Colonic mucosa (tissue), 4 donors: ENCODE measurements at regions of chr13 and their contacts with region 1.

Region 1: DNA sequence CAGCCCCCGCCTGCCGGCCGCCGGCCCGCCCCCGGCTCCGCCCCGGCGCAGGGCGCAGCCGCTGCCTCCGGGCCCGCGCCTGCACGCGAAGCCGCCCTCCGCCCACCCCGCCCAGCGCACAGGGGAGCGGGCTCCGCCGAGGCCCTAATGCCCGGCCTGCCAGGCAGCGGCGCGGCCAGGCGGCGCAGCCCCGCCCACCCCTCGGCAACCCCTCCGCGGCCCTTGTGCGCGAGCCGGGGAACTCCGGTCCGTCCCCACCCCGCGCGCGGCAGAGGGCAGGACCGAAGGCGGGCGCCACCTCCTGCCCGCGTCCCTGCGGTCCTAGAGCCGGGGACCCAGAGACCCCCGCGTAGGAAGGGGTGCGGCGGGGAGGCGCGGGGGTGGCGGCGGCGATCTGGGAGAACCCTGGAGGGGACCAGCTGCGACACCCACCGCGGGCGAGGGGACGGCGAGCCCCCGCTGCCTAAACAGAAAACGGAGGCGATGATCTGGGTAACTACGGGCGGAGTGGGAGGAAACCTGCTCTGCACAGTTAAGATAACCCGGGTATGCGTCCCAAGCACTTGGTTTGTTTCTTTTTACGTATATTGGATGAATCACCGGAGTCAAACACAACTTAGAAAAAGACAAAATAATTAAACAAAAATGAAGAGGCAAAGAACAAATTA is 350 bp upstream of the USP12 start:
- DNase-seq: peak; percentile 92
- H3K4me3 ChIP-seq: peak overlapping the region; percentile 66
- H3K27ac ChIP-seq: peak overlapping the region; percentile 95
- H3K4me1 ChIP-seq: peaks cover 5% of the 10 kb centered on the region
- H3K27me3 ChIP-seq: no peaks in the 10 kb centered on the region
- CTCF ChIP-seq: peak; percentile 20

Region 2: GRCh38 chr13:27117158-27117557 is 54.8 kb before region 1 on chr13:
- intact Hi-C with region 1: loop called (anchors 10 kb)
- DNase-seq: no peak
- H3K4me3 ChIP-seq: no peak overlapping the region
- H3K27ac ChIP-seq: no peak overlapping the region
- H3K4me1 ChIP-seq: no peaks in the 10 kb centered on the region
- H3K27me3 ChIP-seq: no peaks in the 10 kb centered on the region
- CTCF ChIP-seq: no peak

Region 3: DNA sequence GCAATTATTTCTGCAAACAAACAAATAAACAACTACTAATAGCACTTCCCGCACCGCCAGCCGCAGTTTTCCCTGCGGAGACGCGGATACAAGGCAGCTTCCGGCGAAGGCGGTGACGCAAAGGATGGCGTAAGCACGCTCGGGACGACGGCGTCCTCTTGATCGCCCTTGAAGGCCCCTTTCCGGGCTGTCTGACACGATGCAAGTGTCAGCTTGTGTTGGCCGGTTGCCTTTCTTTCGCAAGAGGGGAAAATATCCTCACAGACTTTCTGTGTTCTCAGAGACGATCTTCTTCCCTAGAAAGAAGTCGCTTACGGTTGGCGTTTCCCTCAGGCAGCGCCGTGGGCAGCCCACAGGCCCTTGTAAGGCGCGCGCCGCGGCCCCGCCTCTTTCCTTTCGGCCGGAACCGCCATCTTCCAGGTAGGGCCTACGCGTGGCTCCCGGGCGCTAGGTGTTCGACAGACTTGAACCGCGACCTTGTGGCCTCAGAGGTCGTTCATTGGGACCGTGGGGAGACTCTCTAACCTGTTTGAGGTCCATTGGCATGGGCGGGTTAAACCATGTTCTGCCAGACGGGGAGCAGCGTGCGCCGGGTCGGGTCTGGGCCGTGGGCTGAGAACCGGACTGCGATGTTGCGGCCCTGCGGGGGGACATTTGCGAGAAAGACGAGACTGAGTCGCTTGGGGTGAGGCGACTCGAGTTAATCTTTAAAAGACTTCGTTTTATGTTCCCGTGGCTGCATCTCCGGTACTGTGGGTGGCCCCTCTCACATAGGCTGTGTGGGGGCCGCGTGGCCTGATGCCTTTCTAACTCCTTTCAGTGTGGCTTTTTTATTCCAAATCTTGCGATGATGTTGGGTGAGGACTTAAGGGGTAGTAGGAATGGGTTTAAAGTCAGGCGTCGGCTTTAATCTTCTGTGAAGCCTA is 79.5 kb after region 1 on chr13 and contains the start of gene RPL21:
- intact Hi-C with region 1: loop called (anchors 5 kb)
- DNase-seq: peak; percentile 96
- H3K4me3 ChIP-seq: peak within 1 kb of the TSS; percentile 85
- H3K27ac ChIP-seq: peak within 1 kb of the TSS; percentile 85
- H3K4me1 ChIP-seq: peaks cover 5% of the 10 kb centered on the region
- H3K27me3 ChIP-seq: no peaks in the 10 kb centered on the region
- CTCF ChIP-seq: no peak
- total RNA-seq, gene RPL21: 795 to 929 TPM